HCT116 (cell line): ENCODE measurements at regions of chr10 and their contacts with region 1.

Region 1: GRCh38 chr10:60733189-60733822 is 45.0 kb upstream of the CDK1 start:
- DNase-seq: peak; percentile 39
- ATAC-seq: peak; percentile 98
- H3K4me3 ChIP-seq: peak overlapping the region; percentile 58 to 73
- H3K27ac ChIP-seq: peak overlapping the region; percentile 49; the same call in 1 of the 2 replicates
- H3K4me1 ChIP-seq: peaks cover 5 to 20% of the 10 kb centered on the region in 2 experiments; a peak in 3 of 4 replicates
- H3K27me3 ChIP-seq: no peaks in the 10 kb centered on the region
- CTCF ChIP-seq: peak in 2 of 3 experiments; percentile 40 to 54; a peak in 4 of 6 replicates
- POLR2A ChIP-seq: no peak
- RAD21 ChIP-seq: no peak

Region 2: GRCh38 chr10:60677531-60678129 is 55.7 kb before region 1 on chr10:
- CTCF ChIA-PET with region 1: no interaction called
- POLR2A ChIA-PET with region 1: no interaction called
- RAD21 ChIA-PET with region 1: no interaction called
- intact Hi-C with region 1: no loop called
- DNase-seq: no peak
- ATAC-seq: no peak
- H3K4me3 ChIP-seq: no peak overlapping the region
- H3K27ac ChIP-seq: no peak overlapping the region
- H3K4me1 ChIP-seq: no peaks in the 10 kb centered on the region
- H3K27me3 ChIP-seq: no peaks in the 10 kb centered on the region
- CTCF ChIP-seq: no peak
- POLR2A ChIP-seq: no peak
- RAD21 ChIP-seq: no peak

Region 3: DNA sequence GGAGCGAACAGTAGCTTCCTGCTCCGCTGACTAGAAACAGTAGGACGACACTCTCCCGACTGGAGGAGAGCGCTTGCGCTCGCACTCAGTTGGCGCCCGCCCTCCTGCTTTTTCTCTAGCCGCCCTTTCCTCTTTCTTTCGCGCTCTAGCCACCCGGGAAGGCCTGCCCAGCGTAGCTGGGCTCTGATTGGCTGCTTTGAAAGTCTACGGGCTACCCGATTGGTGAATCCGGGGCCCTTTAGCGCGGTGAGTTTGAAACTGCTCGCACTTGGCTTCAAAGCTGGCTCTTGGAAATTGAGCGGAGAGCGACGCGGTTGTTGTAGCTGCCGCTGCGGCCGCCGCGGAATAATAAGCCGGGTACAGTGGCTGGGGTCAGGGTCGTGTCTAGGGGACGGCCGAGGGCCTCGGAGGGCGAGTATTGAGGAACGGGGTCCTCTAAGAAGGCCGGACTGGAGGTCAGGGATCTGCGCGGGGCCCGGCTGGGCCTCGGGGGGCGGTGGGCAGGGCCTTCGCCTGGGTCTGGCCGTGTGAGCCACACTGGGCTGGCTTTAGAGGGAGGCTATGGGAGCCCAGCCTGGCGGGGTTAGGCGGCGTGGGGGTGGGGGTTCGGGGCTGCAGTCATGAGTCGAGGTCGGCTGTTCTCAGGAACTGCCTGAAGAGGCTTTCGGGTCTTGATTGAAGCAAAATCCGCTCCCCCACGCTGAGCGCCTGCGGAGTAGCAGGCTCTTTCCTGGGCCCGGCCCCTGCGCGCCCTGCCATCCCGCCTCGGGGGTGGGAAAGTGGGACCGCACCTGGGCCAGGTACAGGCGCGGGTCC is 45.1 kb after region 1 on chr10 and contains the start of gene CDK1:
- CTCF ChIA-PET with region 1: no interaction called
- POLR2A ChIA-PET with region 1: no interaction called
- RAD21 ChIA-PET with region 1: no interaction called
- intact Hi-C with region 1: loop called (anchors 2 kb)
- DNase-seq: peak; percentile 97
- ATAC-seq: peak; percentile 95
- H3K4me3 ChIP-seq: peak within 1 kb of the TSS; percentile 84 to 87
- H3K27ac ChIP-seq: peak within 1 kb of the TSS; percentile 77
- H3K4me1 ChIP-seq: peaks cover 0 to 13% of the 10 kb centered on the region in 2 experiments; a peak in 2 of 4 replicates
- H3K27me3 ChIP-seq: no peaks in the 10 kb centered on the region
- CTCF ChIP-seq: no peak
- POLR2A ChIP-seq: peak; percentile 70
- RAD21 ChIP-seq: no peak
- total RNA-seq, gene CDK1: 104 TPM